ENCODE measurements at regions of chr12 and their contacts with region 1.

Region 1: GRCh38 chr12:68158432-68158831 is 1.1 kb downstream of the IFNG start:
- DNase-seq: peak in 4 of 9 experiments; percentile 21 to 79 (median 49)
- ATAC-seq: peak; percentile 62
- H3K4me3 ChIP-seq: peak overlapping the region in 1 of 2 experiments; percentile 57
- H3K4me3 Mint-ChIP-seq: peak overlapping the region; percentile 33
- H3K27ac ChIP-seq: peak overlapping the region in 1 of 2 experiments; percentile 80
- H3K27ac Mint-ChIP-seq: no peak overlapping the region
- H3K4me1 ChIP-seq: peaks cover 5% of the 10 kb centered on the region
- H3K4me1 Mint-ChIP-seq: peaks cover 51% of the 10 kb centered on the region
- H3K27me3 ChIP-seq: no peaks in the 10 kb centered on the region
- H3K27me3 Mint-ChIP-seq: no peaks in the 10 kb centered on the region
- CTCF ChIP-seq: peak; percentile 61

Region 2: GRCh38 chr12:68113644-68114043 is 44.8 kb before region 1 on chr12:
- CTCF ChIA-PET with region 1: interaction called, 21 read pairs
- POLR2A ChIA-PET with region 1: interaction called, 7 read pairs
- intact Hi-C with region 1: loop called (anchors 2 to 5 kb)
- DNase-seq: peak in 5 of 9 experiments; percentile 24 to 71 (median 60)
- ATAC-seq: no peak
- H3K4me3 ChIP-seq: no peak overlapping the region
- H3K4me3 Mint-ChIP-seq: no peak overlapping the region
- H3K27ac ChIP-seq: no peak overlapping the region
- H3K27ac Mint-ChIP-seq: no peak overlapping the region
- H3K4me1 ChIP-seq: peaks cover 6% of the 10 kb centered on the region
- H3K4me1 Mint-ChIP-seq: peaks cover 18% of the 10 kb centered on the region
- H3K27me3 ChIP-seq: no peaks in the 10 kb centered on the region
- H3K27me3 Mint-ChIP-seq: no peaks in the 10 kb centered on the region
- CTCF ChIP-seq: peak; percentile 43

Region 3: DNA sequence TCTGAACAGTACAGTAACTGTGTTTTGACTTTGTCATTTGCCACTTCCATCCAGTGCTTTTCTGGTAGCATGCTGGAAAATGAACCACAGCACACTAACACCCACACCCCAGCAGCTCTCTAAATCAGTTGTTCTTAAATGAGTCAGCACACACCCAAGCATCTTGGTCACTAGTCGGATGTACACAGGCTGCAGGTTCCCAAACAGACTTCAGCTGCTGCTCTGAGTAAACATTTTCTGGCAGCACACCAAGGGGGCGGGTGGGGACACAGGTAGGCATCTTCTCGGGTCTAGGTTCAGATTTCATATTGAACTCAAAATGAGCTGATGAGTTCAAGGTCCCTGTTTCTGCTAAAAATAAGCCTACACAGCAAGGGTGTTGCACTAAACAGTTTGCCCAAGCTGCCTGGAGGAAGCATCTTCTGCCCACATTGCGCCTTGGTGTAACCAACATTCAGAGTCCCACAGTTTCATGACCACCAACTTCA is 38.7 kb before region 1 on chr12:
- CTCF ChIA-PET with region 1: interaction called, 21 read pairs
- POLR2A ChIA-PET with region 1: interaction called, 7 read pairs
- intact Hi-C with region 1: loop called (anchors 2 to 5 kb)
- DNase-seq: peak in 6 of 9 experiments; percentile 31 to 77 (median 62)
- ATAC-seq: peak; percentile 77
- H3K4me3 ChIP-seq: peak overlapping the region in 1 of 2 experiments; percentile 1
- H3K4me3 Mint-ChIP-seq: no peak overlapping the region
- H3K27ac ChIP-seq: peak overlapping the region in 1 of 2 experiments; percentile 73
- H3K27ac Mint-ChIP-seq: peak overlapping the region; percentile 69
- H3K4me1 ChIP-seq: peaks cover 12% of the 10 kb centered on the region
- H3K4me1 Mint-ChIP-seq: peaks cover 34% of the 10 kb centered on the region
- H3K27me3 ChIP-seq: no peaks in the 10 kb centered on the region
- H3K27me3 Mint-ChIP-seq: no peaks in the 10 kb centered on the region
- CTCF ChIP-seq: no peak

Region 4: GRCh38 chr12:68169213-68169889 is 10.9 kb after region 1 on chr12:
- CTCF ChIA-PET with region 1: interaction called, 15 read pairs
- POLR2A ChIA-PET with region 1: interaction called, 3 read pairs
- intact Hi-C with region 1: loop called in 1 of 2 experiments (anchors 2 kb)
- DNase-seq: no peak
- ATAC-seq: no peak
- H3K4me3 ChIP-seq: no peak overlapping the region
- H3K4me3 Mint-ChIP-seq: no peak overlapping the region
- H3K27ac ChIP-seq: no peak overlapping the region
- H3K27ac Mint-ChIP-seq: no peak overlapping the region
- H3K4me1 ChIP-seq: peaks cover 11% of the 10 kb centered on the region
- H3K4me1 Mint-ChIP-seq: peaks cover 11% of the 10 kb centered on the region
- H3K27me3 ChIP-seq: no peaks in the 10 kb centered on the region
- H3K27me3 Mint-ChIP-seq: no peaks in the 10 kb centered on the region
- CTCF ChIP-seq: no peak

Region 5: DNA sequence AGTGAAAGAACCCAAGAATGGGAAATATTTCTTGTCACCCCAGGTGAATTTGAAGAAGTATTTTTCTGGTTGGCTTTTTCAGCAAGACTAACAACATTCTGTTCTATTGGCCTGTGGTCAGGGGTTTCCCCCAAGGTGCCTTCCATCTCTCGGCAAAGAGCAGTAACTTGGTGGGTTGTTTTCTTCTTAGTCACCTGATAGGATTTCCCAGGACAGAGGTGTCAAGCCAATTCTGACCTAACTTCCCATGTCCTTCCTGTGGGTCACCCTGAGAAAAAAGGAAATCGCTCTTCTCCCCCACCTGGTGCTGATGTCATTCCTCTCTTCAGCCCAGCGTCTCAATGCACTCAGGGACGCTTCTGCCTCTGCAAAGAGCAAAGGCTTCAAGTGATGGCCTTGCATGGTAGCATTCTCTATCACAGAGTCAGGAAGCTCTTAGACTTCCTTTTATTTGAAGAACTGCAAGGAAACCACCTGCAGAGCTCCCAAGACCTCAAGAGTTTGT is 17.2 kb after region 1 on chr12:
- CTCF ChIA-PET with region 1: interaction called, 15 read pairs
- POLR2A ChIA-PET with region 1: interaction called, 6 read pairs
- intact Hi-C with region 1: loop called in 1 of 2 experiments (anchors 2 kb)
- DNase-seq: peak; percentile 26 to 95 (median 60)
- ATAC-seq: peak; percentile 86
- H3K4me3 ChIP-seq: peak overlapping the region; percentile 19 to 33
- H3K4me3 Mint-ChIP-seq: peak overlapping the region; percentile 77
- H3K27ac ChIP-seq: peak overlapping the region; percentile 62 to 71
- H3K27ac Mint-ChIP-seq: peak overlapping the region; percentile 95
- H3K4me1 ChIP-seq: peaks cover 66% of the 10 kb centered on the region
- H3K4me1 Mint-ChIP-seq: peaks cover 67% of the 10 kb centered on the region
- H3K27me3 ChIP-seq: no peaks in the 10 kb centered on the region
- H3K27me3 Mint-ChIP-seq: no peaks in the 10 kb centered on the region
- CTCF ChIP-seq: no peak

Region 6: DNA sequence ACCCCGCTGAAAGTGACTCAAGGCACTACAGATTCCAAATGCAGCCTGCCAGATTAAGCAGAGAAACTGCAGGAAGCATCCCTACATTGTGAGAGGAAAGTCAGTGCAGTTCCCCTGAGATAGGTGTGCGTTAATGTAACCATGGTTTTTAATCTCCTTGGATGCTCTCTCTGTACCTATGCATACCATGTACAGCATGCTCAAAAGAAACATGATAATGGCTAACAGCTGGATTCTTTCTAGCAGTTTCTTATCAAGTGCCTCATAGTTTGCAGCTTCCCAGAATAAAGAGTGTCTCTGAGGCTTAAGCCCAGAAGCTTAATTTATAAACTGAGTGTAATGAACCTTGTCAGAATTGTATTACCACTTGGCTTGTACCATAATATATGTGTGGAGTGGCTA is 190.8 kb after region 1 on chr12:
- CTCF ChIA-PET with region 1: no interaction called
- POLR2A ChIA-PET with region 1: no interaction called
- intact Hi-C with region 1: no loop called
- DNase-seq: no peak
- ATAC-seq: no peak
- H3K4me3 ChIP-seq: no peak overlapping the region
- H3K4me3 Mint-ChIP-seq: no peak overlapping the region
- H3K27ac ChIP-seq: no peak overlapping the region
- H3K27ac Mint-ChIP-seq: no peak overlapping the region
- H3K4me1 ChIP-seq: peaks cover 3% of the 10 kb centered on the region
- H3K4me1 Mint-ChIP-seq: peaks cover 8% of the 10 kb centered on the region
- H3K27me3 ChIP-seq: no peaks in the 10 kb centered on the region
- H3K27me3 Mint-ChIP-seq: no peaks in the 10 kb centered on the region
- CTCF ChIP-seq: no peak

Region 7: GRCh38 chr12:68497702-68498101 is 339.3 kb after region 1 on chr12:
- CTCF ChIA-PET with region 1: no interaction called
- POLR2A ChIA-PET with region 1: no interaction called
- intact Hi-C with region 1: no loop called
- DNase-seq: peak in 2 of 9 experiments; percentile 35 to 47
- ATAC-seq: peak; percentile 36
- H3K4me3 ChIP-seq: peak overlapping the region in 1 of 2 experiments; percentile 9
- H3K4me3 Mint-ChIP-seq: peak overlapping the region; percentile 50
- H3K27ac ChIP-seq: peak overlapping the region in 1 of 2 experiments; percentile 28
- H3K27ac Mint-ChIP-seq: no peak overlapping the region
- H3K4me1 ChIP-seq: peaks cover 4% of the 10 kb centered on the region
- H3K4me1 Mint-ChIP-seq: peaks cover 17% of the 10 kb centered on the region
- H3K27me3 ChIP-seq: no peaks in the 10 kb centered on the region
- H3K27me3 Mint-ChIP-seq: no peaks in the 10 kb centered on the region
- CTCF ChIP-seq: no peak

Region 8: GRCh38 chr12:69039894-69040293 is 881.5 kb after region 1 on chr12:
- CTCF ChIA-PET with region 1: no interaction called
- POLR2A ChIA-PET with region 1: no interaction called
- intact Hi-C with region 1: no loop called
- DNase-seq: peak in 1 of 9 experiments; percentile 7
- ATAC-seq: no peak
- H3K4me3 ChIP-seq: no peak overlapping the region
- H3K4me3 Mint-ChIP-seq: no peak overlapping the region
- H3K27ac ChIP-seq: no peak overlapping the region
- H3K27ac Mint-ChIP-seq: no peak overlapping the region
- H3K4me1 ChIP-seq: no peaks in the 10 kb centered on the region
- H3K4me1 Mint-ChIP-seq: no peaks in the 10 kb centered on the region
- H3K27me3 ChIP-seq: no peaks in the 10 kb centered on the region
- H3K27me3 Mint-ChIP-seq: peaks cover 6% of the 10 kb centered on the region
- CTCF ChIP-seq: no peak

Measured in CD8-positive, alpha-beta T cell (primary cell).